ENCODE measurements at regions of chr18 and their contacts with region 1.

Region 1: GRCh38 chr18:57881818-57882413 is 78.8 kb upstream of the ATP8B1 start:
- DNase-seq: peak; percentile 83
- H3K4me3 ChIP-seq: no peak overlapping the region
- H3K27ac ChIP-seq: no peak overlapping the region
- H3K4me1 ChIP-seq: no peaks in the 10 kb centered on the region
- H3K27me3 ChIP-seq: no peaks in the 10 kb centered on the region
- CTCF ChIP-seq: peak; percentile 85 to 91
- POLR2A ChIP-seq: no peak

Region 2: GRCh38 chr18:57630002-57630753 is 251.7 kb before region 1 on chr18:
- CTCF ChIA-PET with region 1: interaction called, 4 read pairs
- POLR2A ChIA-PET with region 1: no interaction called
- dilution Hi-C with region 1: no loop called
- intact Hi-C with region 1: loop called (anchors 5 kb)
- DNase-seq: peak; percentile 94
- H3K4me3 ChIP-seq: peak overlapping the region; percentile 44 to 74 (median 55)
- H3K27ac ChIP-seq: peak overlapping the region; percentile 63
- H3K4me1 ChIP-seq: peaks cover 27% of the 10 kb centered on the region
- H3K27me3 ChIP-seq: no peaks in the 10 kb centered on the region
- CTCF ChIP-seq: peak; percentile 73 to 75
- POLR2A ChIP-seq: peak; percentile 37

Region 3: DNA sequence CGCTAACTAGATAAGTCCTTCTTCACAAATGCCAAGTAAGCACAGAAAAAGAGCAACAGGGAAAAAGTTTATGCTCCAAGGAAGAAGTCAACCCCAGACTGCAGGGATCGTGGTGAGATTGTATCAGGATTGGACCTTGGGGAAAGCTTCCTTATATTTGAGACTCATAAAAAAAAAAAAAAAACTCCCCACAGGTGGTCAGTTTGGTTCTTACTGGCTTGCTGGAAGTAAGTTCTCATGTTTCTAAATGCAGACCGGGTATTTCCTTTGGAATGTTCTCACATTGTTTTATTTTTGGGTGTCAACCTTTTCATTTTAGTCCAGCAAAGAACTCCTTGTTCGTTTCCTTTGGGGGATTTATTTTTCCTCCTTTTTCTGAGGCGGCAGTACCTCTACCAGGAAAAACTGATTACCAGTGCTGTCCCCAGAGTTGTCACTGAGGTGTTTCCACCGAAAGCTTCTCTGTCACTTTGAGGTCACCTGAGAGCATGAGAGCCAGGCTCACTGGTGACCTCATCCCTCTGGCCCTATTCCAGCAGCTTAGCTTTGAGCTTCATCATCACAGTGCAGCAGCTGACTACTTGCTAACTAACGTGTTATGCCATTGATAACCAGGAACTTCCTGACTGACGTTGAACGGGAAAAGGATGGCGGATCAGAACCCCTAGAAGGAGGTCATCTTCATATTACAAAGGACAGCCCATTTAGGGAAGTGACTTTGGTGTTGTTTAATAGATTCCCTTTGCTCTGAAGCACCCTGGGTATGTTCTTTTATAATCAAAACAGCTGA is 62.0 kb before region 1 on chr18:
- CTCF ChIA-PET with region 1: interaction called, 8 read pairs
- POLR2A ChIA-PET with region 1: no interaction called
- dilution Hi-C with region 1: no loop called
- intact Hi-C with region 1: loop called (anchors 2 kb)
- DNase-seq: peak; percentile 99
- H3K4me3 ChIP-seq: no peak overlapping the region
- H3K27ac ChIP-seq: peak overlapping the region; percentile 96
- H3K4me1 ChIP-seq: peaks cover 18% of the 10 kb centered on the region
- H3K27me3 ChIP-seq: no peaks in the 10 kb centered on the region
- CTCF ChIP-seq: no peak
- POLR2A ChIP-seq: peak; percentile 43

Region 4: GRCh38 chr18:57959278-57959677 is 77.4 kb after region 1 on chr18:
- CTCF ChIA-PET with region 1: interaction called, 15 read pairs
- POLR2A ChIA-PET with region 1: no interaction called
- dilution Hi-C with region 1: no loop called
- intact Hi-C with region 1: no loop called
- DNase-seq: peak; percentile 59
- H3K4me3 ChIP-seq: no peak overlapping the region
- H3K27ac ChIP-seq: no peak overlapping the region
- H3K4me1 ChIP-seq: peaks cover 3% of the 10 kb centered on the region
- H3K27me3 ChIP-seq: peaks cover 4 to 14% of the 10 kb centered on the region in 2 experiments
- CTCF ChIP-seq: peak; percentile 22 to 44
- POLR2A ChIP-seq: no peak

Region 5: GRCh38 chr18:58135701-58136331 is 253.9 kb after region 1 on chr18:
- CTCF ChIA-PET with region 1: interaction called, 18 read pairs
- POLR2A ChIA-PET with region 1: no interaction called
- dilution Hi-C with region 1: no loop called
- intact Hi-C with region 1: loop called (anchors 1 kb)
- DNase-seq: peak; percentile 69
- H3K4me3 ChIP-seq: no peak overlapping the region
- H3K27ac ChIP-seq: no peak overlapping the region
- H3K4me1 ChIP-seq: peaks cover 2% of the 10 kb centered on the region
- H3K27me3 ChIP-seq: no peaks in the 10 kb centered on the region
- CTCF ChIP-seq: peak; percentile 85 to 91
- POLR2A ChIP-seq: no peak

Region 6: GRCh38 chr18:58754544-58755068 is 872.7 kb after region 1 on chr18:
- CTCF ChIA-PET with region 1: no interaction called
- POLR2A ChIA-PET with region 1: no interaction called
- dilution Hi-C with region 1: no loop called
- intact Hi-C with region 1: no loop called
- DNase-seq: no peak
- H3K4me3 ChIP-seq: no peak overlapping the region
- H3K27ac ChIP-seq: no peak overlapping the region
- H3K4me1 ChIP-seq: no peaks in the 10 kb centered on the region
- H3K27me3 ChIP-seq: no peaks in the 10 kb centered on the region
- CTCF ChIP-seq: no peak
- POLR2A ChIP-seq: no peak

Measured in endothelial cell of umbilical vein (primary cell).